GM12878 (cell line): ENCODE measurements at regions of chr3 and their contacts with region 1.

Region 1: GRCh38 chr3:159252772-159253384 is 451.0 kb downstream of the MFSD1 start:
- DNase-seq: peak; percentile 11
- ATAC-seq: no peak
- H3K4me3 ChIP-seq: no peak overlapping the region
- H3K27ac ChIP-seq: no peak overlapping the region
- H3K4me1 ChIP-seq: no peaks in the 10 kb centered on the region
- H3K27me3 ChIP-seq: no peaks in the 10 kb centered on the region
- CTCF ChIP-seq: peak; percentile 35 to 58 (median 41); a peak in 4 of 6 replicates
- EP300 ChIP-seq: no peak
- POLR2A ChIP-seq: no peak
- RAD21 ChIP-seq: peak; percentile 85

Region 2: GRCh38 chr3:159130108-159130507 is 122.8 kb before region 1 on chr3:
- CTCF ChIA-PET with region 1: interaction called, 7 read pairs
- POLR2A ChIA-PET with region 1: no interaction called
- RAD21 ChIA-PET with region 1: no interaction called
- SMC1A ChIA-PET with region 1: no interaction called
- in situ Hi-C with region 1: loop called (anchors 5 kb)
- intact Hi-C with region 1: loop called (anchors 2 kb)
- DNase-seq: no peak
- ATAC-seq: peak; percentile 36; the same call in 1 of the 3 replicates
- H3K4me3 ChIP-seq: no peak overlapping the region
- H3K27ac ChIP-seq: no peak overlapping the region
- H3K4me1 ChIP-seq: no peaks in the 10 kb centered on the region
- H3K27me3 ChIP-seq: no peaks in the 10 kb centered on the region
- CTCF ChIP-seq: peak; percentile 34 to 62 (median 40); a peak in 5 of 6 replicates
- EP300 ChIP-seq: no peak
- POLR2A ChIP-seq: no peak
- RAD21 ChIP-seq: peak; percentile 67

Region 3: DNA sequence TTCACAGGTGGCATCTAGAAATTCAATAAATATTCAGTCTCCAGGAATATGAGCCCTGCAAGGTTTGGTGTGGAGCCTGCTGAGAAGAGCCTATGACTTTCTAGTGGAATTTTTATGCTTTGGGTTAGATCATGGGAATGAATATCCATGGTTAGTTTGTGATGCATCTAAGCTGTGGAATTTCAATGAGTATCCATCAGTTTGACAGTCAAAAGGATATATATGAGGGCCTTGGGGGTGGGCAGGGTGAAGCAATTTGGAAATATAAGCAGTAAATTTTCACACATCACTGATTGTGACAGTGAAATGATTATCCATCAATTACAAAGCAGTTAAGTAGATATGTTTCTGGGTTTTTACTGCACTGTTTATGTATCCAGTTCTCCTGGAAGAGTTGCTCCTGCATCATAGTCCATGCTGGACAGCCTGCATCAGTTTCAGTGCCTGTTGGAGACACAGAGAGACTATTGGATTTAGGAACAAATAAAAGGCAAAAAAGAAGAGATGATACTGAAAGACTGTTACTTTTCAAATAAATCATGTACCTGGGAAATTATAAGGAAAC is 79.7 kb after region 1 on chr3:
- CTCF ChIA-PET with region 1: no interaction called
- POLR2A ChIA-PET with region 1: no interaction called
- RAD21 ChIA-PET with region 1: no interaction called
- SMC1A ChIA-PET with region 1: no interaction called
- in situ Hi-C with region 1: no loop called
- intact Hi-C with region 1: no loop called
- DNase-seq: no peak
- ATAC-seq: no peak
- H3K4me3 ChIP-seq: no peak overlapping the region
- H3K27ac ChIP-seq: no peak overlapping the region
- H3K4me1 ChIP-seq: no peaks in the 10 kb centered on the region
- H3K27me3 ChIP-seq: no peaks in the 10 kb centered on the region; a peak in 1 of 4 replicates
- CTCF ChIP-seq: no peak
- EP300 ChIP-seq: no peak
- POLR2A ChIP-seq: no peak
- RAD21 ChIP-seq: no peak